Tibial artery (tissue), 4 donors: ENCODE measurements at regions of chr9 and their contacts with region 1.

Region 1: DNA sequence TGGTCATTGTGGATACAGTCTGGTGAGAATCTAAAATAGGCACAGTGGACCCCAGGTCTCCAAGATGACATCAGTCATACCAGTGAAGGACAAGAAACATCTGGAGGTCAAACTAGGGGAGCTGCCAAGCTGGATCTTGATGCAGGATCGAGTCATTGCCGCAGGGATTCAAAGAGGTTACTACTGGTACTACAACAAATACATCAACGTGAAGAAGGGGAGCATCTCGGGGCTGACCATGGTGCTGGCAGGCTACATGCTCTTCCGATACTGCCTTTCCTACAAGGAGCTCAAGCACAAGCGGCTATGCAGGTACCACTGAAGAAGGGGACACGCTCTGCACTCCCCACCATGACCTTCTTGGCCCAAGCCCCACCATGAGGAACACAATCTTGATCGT is 20.9 kb downstream of the FOXB2 start:
- DNase-seq: no peak
- H3K4me3 ChIP-seq: no peak overlapping the region
- H3K27ac ChIP-seq: no peak overlapping the region
- H3K4me1 ChIP-seq: no peaks in the 10 kb centered on the region
- H3K27me3 ChIP-seq: peaks cover 0 to 23% of the 10 kb centered on the region in 2 donors
- CTCF ChIP-seq: no peak

Region 2: DNA sequence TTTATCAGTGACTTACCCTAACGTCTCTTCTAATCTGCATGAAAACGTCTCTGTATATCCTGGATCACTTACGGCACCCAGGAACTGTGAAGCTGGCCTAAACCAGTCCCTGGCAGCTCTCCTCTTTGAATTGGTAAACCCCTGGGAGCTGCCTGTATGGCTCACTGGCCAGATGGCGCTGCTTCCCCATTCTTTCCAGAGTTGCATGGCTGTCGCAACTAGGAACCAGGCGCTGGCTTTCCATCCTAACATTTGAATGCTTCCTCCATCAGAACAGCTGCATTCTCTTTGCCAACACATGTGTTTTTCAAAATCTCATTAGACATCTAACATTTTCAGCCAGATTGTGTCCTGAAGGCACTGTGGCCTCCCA is 284.1 kb before region 1 on chr9:
- intact Hi-C with region 1: no loop called
- DNase-seq: peak in 1 of 2 donors; percentile 49
- H3K4me3 ChIP-seq: no peak overlapping the region
- H3K27ac ChIP-seq: no peak overlapping the region
- H3K4me1 ChIP-seq: peaks cover 0 to 11% (median 0%) of the 10 kb centered on the region in 4 donors
- H3K27me3 ChIP-seq: no peaks in the 10 kb centered on the region
- CTCF ChIP-seq: no peak

Region 3: GRCh38 chr9:76987594-76988200 is 52.7 kb before region 1 on chr9:
- intact Hi-C with region 1: no loop called
- DNase-seq: no peak
- H3K4me3 ChIP-seq: no peak overlapping the region
- H3K27ac ChIP-seq: no peak overlapping the region
- H3K4me1 ChIP-seq: peaks cover 0 to 11% (median 0%) of the 10 kb centered on the region in 4 donors
- H3K27me3 ChIP-seq: no peaks in the 10 kb centered on the region
- CTCF ChIP-seq: peak; percentile 46 to 54

Region 4: GRCh38 chr9:78291240-78291925 is 1251.0 kb after region 1 on chr9:
- intact Hi-C with region 1: loop called (anchors 5 kb)
- DNase-seq: no peak
- H3K4me3 ChIP-seq: no peak overlapping the region
- H3K27ac ChIP-seq: no peak overlapping the region
- H3K4me1 ChIP-seq: peaks cover 0 to 7% (median under 1%) of the 10 kb centered on the region in 4 donors
- H3K27me3 ChIP-seq: no peaks in the 10 kb centered on the region
- CTCF ChIP-seq: no peak